Activated CD4-positive, alpha-beta T cell treated with anti-CD3 and anti-CD28 coated beads, Interleukin-2, amount 10 ng/mL, durations not matched to agents 7 days and 5 days (primary cell): ENCODE measurements at regions of chr6 and their contacts with region 1.

Region 1: DNA sequence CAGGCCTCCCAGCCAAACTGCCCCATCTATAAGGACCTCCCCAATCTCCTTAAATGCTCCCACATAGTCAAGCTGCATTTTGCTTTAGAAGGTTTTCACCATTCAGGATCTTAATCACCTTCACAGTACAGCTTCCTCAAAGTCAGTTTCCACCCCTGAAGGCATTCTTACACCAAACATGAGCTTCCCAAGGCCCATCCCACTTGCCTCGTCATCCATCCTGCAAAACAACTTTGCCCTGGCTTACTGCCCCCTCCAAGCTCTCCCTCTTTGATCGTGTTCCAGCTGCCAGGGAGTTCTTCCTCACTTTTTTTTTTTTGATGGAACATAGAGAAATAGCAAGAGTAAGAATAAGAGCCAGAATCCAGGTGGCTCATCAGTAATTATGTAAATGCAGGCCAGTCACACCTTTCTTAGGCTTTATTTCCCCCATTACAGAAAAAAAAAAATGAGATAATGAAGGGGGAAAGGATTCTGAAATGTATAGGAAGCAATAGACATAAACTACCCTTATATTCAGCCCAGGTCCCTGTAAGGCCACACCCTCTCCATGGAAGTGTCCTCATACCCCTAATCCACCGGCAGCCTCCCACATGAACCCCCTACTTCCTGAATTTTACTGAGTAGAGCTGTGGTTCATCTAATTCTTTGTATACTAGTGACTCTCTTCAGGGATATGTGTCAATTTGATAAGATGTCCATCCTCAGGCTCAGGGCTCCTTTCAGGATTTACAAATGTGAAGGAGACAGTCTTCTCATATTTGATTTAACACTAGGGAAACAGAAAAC is 12.7 kb downstream of the TRIM27 start:
- DNase-seq: no peak
- H3K4me3 Mint-ChIP-seq: no peak overlapping the region
- H3K27ac Mint-ChIP-seq: no peak overlapping the region
- H3K4me1 Mint-ChIP-seq: no peaks in the 10 kb centered on the region
- H3K27me3 Mint-ChIP-seq: no peaks in the 10 kb centered on the region

Region 2: GRCh38 chr6:28923318-28924102 is 12.4 kb after region 1 on chr6 and contains the start of gene TRIM27:
- CTCF ChIA-PET with region 1: interaction called, 15 read pairs
- POLR2A ChIA-PET with region 1: no interaction called
- DNase-seq: peak; percentile 81
- H3K4me3 Mint-ChIP-seq: peak within 1 kb of the TSS; percentile 89
- H3K27ac Mint-ChIP-seq: peak within 1 kb of the TSS; percentile 95
- H3K4me1 Mint-ChIP-seq: peaks cover 45% of the 10 kb centered on the region
- H3K27me3 Mint-ChIP-seq: no peaks in the 10 kb centered on the region
- total RNA-seq, gene TRIM27: 63.1 to 66.6 TPM